Activated T-helper 1 cell treated with anti-CD3 and anti-CD28 coated beads, Interleukin-12 subunit alpha, Interleukin-12 subunit beta, Interleukin-2, Interleukin-4 antibody, amounts not matched to agents 30 ng/mL and 10 ng/mL and 1 ng/mL, durations not matched to agents 14 hours and 24 hours and 36 hours (primary cell): ENCODE measurements at regions of chr11 and their contacts with region 1.

Region 1: DNA sequence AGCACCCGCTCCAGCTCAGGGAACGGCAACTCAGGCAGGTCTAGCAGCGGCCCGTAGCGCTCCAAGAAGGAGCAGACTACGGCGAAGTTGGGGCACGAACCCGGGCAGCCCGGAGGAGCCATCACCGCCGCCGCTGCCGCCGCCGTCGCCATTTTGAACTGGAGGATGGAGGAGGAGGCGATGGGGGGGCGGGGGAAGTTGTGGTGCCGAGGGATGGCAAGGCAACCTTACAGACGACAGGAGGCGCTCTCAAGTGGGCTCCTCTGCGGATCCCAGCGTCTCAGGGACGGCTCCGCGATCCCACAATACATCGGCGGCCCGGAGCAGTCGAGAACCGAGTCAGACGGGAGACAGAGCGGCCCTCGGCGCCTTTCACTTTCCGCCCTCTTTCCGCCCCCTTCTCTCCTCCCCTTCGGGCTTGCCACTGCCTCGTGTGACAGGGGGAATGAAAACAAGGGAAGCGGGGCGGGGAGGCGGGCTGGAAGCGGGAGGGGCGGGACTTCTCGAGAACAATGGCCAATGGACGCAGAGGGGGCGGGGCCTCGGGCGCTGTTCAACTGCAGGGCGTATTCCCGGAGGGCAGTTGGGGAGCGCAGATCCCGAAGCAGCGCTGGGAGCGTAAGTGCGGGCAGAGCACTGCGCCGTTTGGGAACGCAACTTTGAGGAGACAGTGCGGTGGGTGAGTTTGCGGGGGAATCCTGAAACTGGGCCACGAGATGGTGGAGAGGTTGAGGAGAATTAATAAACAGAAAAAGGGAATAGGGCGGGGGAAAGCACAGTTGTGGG is at the starts of genes AAMDC and RSF1:
- DNase-seq: peak; percentile 95
- H3K4me3 Mint-ChIP-seq: peak within 1 kb of the TSS; percentile 97
- H3K27ac Mint-ChIP-seq: peak within 1 kb of the TSS; percentile 94
- H3K4me1 Mint-ChIP-seq: peaks cover 38% of the 10 kb centered on the region
- H3K27me3 Mint-ChIP-seq: peaks cover 2% of the 10 kb centered on the region
- total RNA-seq, gene AAMDC: 1.5 and 2.4 TPM in 2 replicates
- total RNA-seq, gene RSF1: 47.0 and 49.2 TPM in 2 replicates

Region 2: DNA sequence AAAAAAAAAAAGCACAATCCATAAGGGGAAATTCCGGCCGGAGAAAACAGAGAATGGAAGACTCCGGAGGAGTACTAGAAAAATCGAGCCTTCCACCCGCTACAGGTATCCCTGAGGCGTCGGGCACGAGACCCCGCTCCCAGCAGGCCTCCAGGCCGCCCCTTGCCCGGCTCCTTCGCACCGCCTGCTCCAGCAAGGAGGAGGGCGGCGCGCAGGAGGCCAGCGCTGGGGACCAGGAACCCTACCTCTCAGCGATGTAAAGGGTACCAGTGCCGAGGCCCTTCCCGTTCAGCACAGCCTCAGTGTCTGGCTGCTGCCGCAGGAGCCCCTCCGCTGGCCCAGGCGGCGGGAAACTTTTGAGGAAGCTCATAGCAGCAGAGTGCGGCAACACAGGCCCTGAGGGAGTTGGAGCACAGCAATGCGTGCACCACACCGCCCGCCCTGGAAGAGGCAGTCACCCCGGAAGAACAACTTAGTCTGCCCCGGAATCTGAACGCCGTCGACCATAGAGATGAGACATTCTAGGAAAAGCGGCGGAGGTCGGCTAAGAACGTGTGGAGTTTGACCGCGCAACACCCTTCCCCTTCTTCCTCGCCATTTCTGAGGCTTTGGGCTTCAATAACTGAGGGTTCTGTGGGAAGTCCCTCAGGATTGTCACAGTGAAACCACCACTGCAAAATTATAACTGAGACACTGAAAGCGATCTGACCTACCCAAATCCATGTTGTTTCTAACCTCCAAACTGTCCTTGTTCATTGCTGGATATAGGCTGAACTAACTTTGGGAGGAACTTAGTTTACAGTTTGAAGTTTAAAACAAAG is 183.2 kb before region 1 on chr11 and contains the start of gene CLNS1A:
- intact Hi-C with region 1: loop called (anchors 1 kb)
- DNase-seq: peak; percentile 74
- H3K4me3 Mint-ChIP-seq: peak within 1 kb of the TSS; percentile 96
- H3K27ac Mint-ChIP-seq: peak within 1 kb of the TSS; percentile 95
- H3K4me1 Mint-ChIP-seq: peaks cover 29% of the 10 kb centered on the region
- H3K27me3 Mint-ChIP-seq: no peaks in the 10 kb centered on the region
- total RNA-seq, gene CLNS1A: 161 and 169 TPM in 2 replicates

Region 3: GRCh38 chr11:77776455-77776854 is 44.3 kb before region 1 on chr11:
- intact Hi-C with region 1: loop called (anchors 1 kb)
- DNase-seq: no peak
- H3K4me3 Mint-ChIP-seq: no peak overlapping the region
- H3K27ac Mint-ChIP-seq: no peak overlapping the region
- H3K4me1 Mint-ChIP-seq: peaks cover 7% of the 10 kb centered on the region
- H3K27me3 Mint-ChIP-seq: no peaks in the 10 kb centered on the region

Region 4: DNA sequence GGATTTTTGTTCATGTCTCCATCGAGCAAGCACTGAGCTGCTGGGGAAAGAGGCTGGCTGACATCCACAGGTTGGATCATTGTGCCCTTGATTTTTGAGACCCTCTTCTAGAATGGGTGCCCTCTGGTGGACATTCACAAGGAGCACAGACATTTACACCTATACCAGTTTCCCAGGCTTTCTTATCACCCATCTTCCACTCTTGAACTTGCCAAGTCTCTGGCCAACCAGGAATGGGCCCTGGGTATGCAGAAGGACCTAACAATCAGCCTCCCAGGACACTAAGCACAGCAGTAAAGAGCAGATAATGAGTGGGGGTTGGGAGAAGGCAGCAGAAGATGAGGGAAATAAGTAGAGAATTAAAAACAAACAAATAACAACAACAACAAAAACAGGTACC is 179.4 kb after region 1 on chr11:
- intact Hi-C with region 1: loop called (anchors 1 kb)
- DNase-seq: peak; percentile 25
- H3K4me3 Mint-ChIP-seq: no peak overlapping the region
- H3K27ac Mint-ChIP-seq: no peak overlapping the region
- H3K4me1 Mint-ChIP-seq: peaks cover 12% of the 10 kb centered on the region
- H3K27me3 Mint-ChIP-seq: peaks cover 14% of the 10 kb centered on the region

Region 5: GRCh38 chr11:78045851-78046485 is 225.2 kb after region 1 on chr11:
- intact Hi-C with region 1: loop called (anchors 1 kb)
- DNase-seq: peak; percentile 68
- H3K4me3 Mint-ChIP-seq: no peak overlapping the region
- H3K27ac Mint-ChIP-seq: no peak overlapping the region
- H3K4me1 Mint-ChIP-seq: peaks cover 13% of the 10 kb centered on the region
- H3K27me3 Mint-ChIP-seq: no peaks in the 10 kb centered on the region

Region 6: GRCh38 chr11:78139422-78140391 is 319.0 kb after region 1 on chr11 and contains the start of gene ALG8:
- intact Hi-C with region 1: loop called (anchors 1 kb)
- DNase-seq: peak; percentile 96
- H3K4me3 Mint-ChIP-seq: peak within 1 kb of the TSS; percentile 95
- H3K27ac Mint-ChIP-seq: peak within 1 kb of the TSS; percentile 90
- H3K4me1 Mint-ChIP-seq: peaks cover 43% of the 10 kb centered on the region
- H3K27me3 Mint-ChIP-seq: no peaks in the 10 kb centered on the region
- total RNA-seq, gene ALG8: 57.9 and 74.2 TPM in 2 replicates

Region 7: DNA sequence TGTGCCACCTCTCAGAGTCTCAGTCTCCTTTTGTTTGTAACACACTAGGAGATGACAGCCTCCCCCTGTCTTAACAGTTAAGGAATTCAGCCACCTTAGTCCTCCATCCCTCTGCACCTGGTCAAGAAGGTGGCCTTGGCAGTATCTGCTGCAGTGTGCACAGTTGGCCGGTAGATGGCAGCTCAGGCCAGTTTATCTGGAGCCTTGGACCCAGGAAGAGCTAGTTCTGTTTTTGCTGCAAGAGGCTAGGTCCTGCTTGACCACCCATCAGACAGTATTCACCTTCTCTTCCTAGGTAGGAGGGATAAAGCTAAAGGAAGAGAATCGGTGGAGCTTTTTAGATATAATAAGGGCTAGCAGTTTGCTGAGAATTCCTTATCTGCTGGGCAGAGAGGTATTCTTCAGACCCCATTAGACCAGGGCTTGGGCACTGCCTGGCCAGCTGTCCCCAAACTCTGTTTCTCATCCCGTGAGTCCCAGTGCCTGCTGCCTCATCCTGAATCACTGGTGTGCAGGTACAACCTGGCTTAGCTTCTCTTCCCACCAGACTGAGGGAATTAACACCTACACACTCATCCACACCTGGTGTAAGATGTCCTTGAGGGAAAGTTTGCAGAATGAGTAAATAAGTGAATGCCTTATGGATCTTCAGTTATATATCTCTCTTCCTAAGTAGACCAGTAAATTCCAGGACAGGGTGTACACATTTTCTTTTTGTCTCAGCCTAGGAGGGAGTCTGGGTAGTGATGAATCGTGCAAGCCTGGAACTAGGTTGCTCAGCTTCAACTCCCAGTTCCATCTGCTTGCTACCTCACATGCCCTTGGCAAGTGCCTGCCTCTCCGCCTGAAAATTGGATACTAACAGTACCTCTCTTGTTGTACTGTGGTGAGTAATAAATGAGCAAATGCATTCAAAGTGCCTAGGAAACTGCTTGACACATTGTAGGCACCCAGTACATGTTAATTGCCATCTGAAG is 824.8 kb after region 1 on chr11:
- intact Hi-C with region 1: loop called (anchors 2 kb)
- DNase-seq: peak; percentile 35
- H3K4me3 Mint-ChIP-seq: no peak overlapping the region
- H3K27ac Mint-ChIP-seq: peak overlapping the region; percentile 69
- H3K4me1 Mint-ChIP-seq: peaks cover 35% of the 10 kb centered on the region
- H3K27me3 Mint-ChIP-seq: no peaks in the 10 kb centered on the region